Dorsolateral prefrontal cortex (tissue), 120 donors: ENCODE measurements at regions of chr20 and their contacts with region 1.

Region 1: GRCh38 chr20:35092524-35093266 is at the start of gene TRPC4AP:
- DNase-seq: peak; percentile 73 to 92 (median 86)
- H3K4me3 ChIP-seq: peak within 1 kb of the TSS; percentile 75 to 98 (median 94)
- H3K27ac ChIP-seq: peak within 1 kb of the TSS; percentile 77 to 98 (median 94)
- H3K27me3 ChIP-seq: no peaks in the 10 kb centered on the region
- CTCF ChIP-seq: peak; percentile 80 to 99 (median 96)
- total RNA-seq, gene TRPC4AP: 43.4 to 98.1 (median 66.6) TPM

Region 2: DNA sequence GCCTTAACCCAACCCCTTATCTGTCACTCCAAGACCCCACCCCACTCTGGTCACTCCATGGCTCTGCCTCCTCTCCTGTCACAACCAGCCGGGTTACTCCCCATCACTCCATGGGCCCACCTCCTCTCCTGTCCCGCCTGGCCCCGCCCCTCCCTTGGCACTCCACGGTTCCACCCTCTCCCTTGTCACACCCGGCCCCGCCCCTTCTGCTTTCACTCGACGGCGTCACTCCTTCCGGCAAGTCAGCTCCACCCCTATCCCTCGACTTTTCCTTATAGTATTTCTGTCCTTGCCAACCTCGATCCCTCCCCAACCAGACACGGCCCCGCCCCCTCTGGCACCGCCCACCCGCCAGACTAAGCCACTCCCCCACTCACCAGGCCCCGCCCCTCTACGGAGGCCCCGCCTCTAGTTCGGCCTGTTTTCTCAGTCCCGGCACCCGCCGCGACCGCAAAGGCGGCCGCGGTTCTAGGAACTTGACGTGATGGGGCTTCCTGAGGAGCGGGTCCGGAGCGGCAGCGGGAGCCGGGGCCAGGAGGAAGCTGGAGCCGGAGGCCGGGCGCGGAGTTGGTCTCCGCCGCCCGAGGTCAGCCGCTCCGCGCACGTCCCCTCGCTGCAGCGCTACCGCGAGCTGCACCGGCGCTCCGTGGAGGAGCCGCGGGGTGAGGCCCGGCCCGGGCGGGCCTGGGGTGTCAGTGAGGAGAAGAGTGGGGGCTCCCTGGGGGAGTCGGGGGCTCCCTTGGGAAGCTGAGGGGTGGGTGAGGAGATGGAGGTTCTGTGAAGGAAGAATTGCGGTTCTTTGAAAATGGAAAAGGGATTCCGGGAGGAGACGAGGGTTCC is 216.3 kb before region 1 on chr20 and contains the start of gene ACSS2:
- intact Hi-C with region 1: loop called (anchors 2 kb)
- DNase-seq: peak; percentile 93 to 100 (median 98)
- H3K4me3 ChIP-seq: peak within 1 kb of the TSS; percentile 58 to 95 (median 87)
- H3K27ac ChIP-seq: peak within 1 kb of the TSS; percentile 39 to 96 (median 88)
- H3K27me3 ChIP-seq: no peaks in the 10 kb centered on the region
- CTCF ChIP-seq: peak in 11 of 56 donors; percentile 2 to 41 (median 12)
- total RNA-seq, gene ACSS2: 35.5 to 131 (median 55.8) TPM

Region 3: GRCh38 chr20:34955232-34956040 is 137.3 kb before region 1 on chr20 and contains the starts of genes GSS and MYH7B:
- intact Hi-C with region 1: loop called (anchors 2 to 5 kb)
- DNase-seq: peak; percentile 94 to 98 (median 96)
- H3K4me3 ChIP-seq: peak within 1 kb of the TSS; percentile 59 to 92 (median 78)
- H3K27ac ChIP-seq: peak within 1 kb of the TSS; percentile 80 to 98 (median 93)
- H3K27me3 ChIP-seq: no peaks in the 10 kb centered on the region
- CTCF ChIP-seq: peak in 38 of 56 donors; percentile 6 to 72 (median 46)
- total RNA-seq, gene GSS: 16.3 to 49.2 (median 35.7) TPM
- total RNA-seq, gene MYH7B: 8.0 to 38.2 (median 21.1) TPM

Region 4: DNA sequence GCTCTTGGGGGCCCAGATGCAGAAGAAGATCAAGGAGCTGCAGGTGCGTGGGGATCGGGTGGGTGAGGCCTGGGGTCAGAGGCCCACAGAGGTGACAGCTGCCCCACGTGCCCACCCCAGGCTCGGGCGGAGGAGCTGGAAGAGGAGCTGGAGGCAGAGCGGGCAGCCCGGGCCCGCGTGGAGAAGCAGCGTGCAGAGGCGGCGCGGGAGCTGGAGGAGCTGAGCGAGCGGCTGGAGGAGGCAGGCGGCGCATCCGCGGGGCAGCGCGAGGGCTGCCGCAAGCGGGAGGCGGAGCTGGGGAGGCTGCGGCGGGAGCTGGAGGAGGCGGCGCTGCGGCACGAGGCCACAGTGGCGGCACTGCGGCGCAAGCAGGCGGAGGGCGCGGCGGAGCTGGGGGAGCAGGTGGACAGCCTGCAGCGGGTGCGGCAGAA is 95.5 kb before region 1 on chr20:
- intact Hi-C with region 1: loop called (anchors 5 kb)
- DNase-seq: peak; percentile 39 to 86 (median 74)
- H3K4me3 ChIP-seq: peak overlapping the region in 42 of 59 donors; percentile 10 to 49 (median 30)
- H3K27ac ChIP-seq: peak overlapping the region in 58 of 59 donors; percentile 33 to 91 (median 81)
- H3K27me3 ChIP-seq: no peaks in the 10 kb centered on the region
- CTCF ChIP-seq: peak in 29 of 56 donors; percentile 13 to 53 (median 27)

Region 5: GRCh38 chr20:35049776-35050352 is 42.8 kb before region 1 on chr20:
- intact Hi-C with region 1: loop called (anchors 2 to 5 kb)
- DNase-seq: no peak
- H3K4me3 ChIP-seq: peak overlapping the region in 4 of 59 donors; percentile 5 to 25 (median 8)
- H3K27ac ChIP-seq: peak overlapping the region; percentile 4 to 100 (median 95)
- H3K27me3 ChIP-seq: no peaks in the 10 kb centered on the region
- CTCF ChIP-seq: peak in 17 of 56 donors; percentile 7 to 50 (median 26)

Region 6: GRCh38 chr20:35129647-35130069 is 37.0 kb after region 1 on chr20:
- intact Hi-C with region 1: no loop called
- DNase-seq: no peak
- H3K4me3 ChIP-seq: no peak overlapping the region
- H3K27ac ChIP-seq: no peak overlapping the region
- H3K27me3 ChIP-seq: no peaks in the 10 kb centered on the region
- CTCF ChIP-seq: no peak

Region 7: DNA sequence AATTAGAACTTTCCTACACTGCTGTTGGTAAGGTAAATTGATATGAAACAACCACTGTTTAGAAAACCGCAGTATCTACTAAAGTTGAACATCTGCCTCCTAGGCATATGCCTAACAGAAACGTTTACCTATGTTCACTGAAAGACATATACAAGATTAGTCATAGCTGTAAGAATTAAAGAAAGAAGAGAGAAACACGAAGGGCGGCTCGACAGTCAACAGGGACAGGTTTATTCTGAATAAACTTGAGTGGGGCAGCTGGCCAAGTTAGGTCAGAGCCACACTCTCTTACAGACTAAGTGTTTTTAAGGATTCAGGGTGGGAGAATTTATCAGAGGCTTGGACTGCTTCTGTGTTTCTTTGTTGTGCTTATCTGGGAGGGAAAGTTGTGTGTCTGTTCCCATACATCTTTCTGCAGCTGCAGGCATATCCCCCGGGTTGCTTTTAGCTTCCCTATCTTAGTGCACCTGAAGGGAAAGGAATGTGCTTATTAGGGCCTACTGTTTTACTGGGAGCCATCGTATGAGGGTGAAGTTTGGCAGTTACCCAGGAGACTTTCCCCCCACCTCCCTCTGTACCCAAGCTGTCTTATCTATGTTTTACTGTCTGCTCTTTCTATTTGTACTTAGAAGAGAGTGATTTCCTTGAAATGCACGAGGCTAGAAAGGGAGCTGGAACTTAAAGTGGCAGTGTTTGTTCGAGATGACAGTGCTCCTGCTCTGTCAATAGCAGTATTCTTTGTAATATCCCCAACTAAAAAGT is 99.6 kb after region 1 on chr20:
- intact Hi-C with region 1: no loop called
- DNase-seq: no peak
- H3K4me3 ChIP-seq: no peak overlapping the region
- H3K27ac ChIP-seq: no peak overlapping the region
- H3K27me3 ChIP-seq: no peaks in the 10 kb centered on the region
- CTCF ChIP-seq: no peak

Region 8: DNA sequence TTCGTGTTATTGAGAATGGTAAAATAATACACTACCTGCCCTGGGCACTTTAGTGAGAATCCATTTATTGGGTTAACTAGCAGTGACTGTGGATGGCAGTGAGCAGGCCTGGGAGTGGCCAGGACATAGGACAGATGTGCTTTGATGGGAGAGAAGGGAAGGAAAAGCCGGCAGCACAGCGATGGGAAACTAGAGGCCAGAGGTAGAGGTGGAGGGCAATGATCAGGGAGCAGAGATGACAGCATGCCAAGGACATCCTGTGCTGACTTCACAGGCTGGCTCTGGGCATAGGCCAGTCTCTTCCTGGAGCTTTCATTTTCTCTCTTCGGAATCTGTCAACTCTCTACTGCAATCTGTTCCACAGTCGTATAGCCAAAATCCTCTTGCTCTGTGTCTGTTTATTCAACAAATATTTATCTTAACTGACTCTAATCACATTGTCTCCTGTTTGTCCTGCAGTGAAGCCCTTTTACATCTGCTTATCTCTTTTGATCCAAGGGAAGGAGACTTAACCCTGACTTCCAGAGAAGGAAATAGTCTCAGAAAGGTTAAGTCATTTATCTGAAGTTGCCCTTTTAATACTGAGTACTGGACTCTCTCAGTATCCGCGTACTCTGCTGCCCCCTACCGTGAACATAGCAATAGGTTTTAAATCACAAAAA is 115.4 kb after region 1 on chr20:
- intact Hi-C with region 1: loop called (anchors 5 kb)
- DNase-seq: peak in 9 of 10 donors; percentile 48 to 84 (median 74)
- H3K4me3 ChIP-seq: peak overlapping the region in 7 of 59 donors; percentile 2 to 28 (median 10)
- H3K27ac ChIP-seq: peak overlapping the region in 48 of 59 donors; percentile 1 to 88 (median 55)
- H3K27me3 ChIP-seq: no peaks in the 10 kb centered on the region
- CTCF ChIP-seq: peak; percentile 63 to 91 (median 84)